ENCODE measurements at regions of chr4 and their contacts with region 1.

Region 1: GRCh38 chr4:113394730-113395530 is 345.5 kb downstream of the ANK2 start:
- DNase-seq: no peak
- ATAC-seq: peak; percentile 93 to 94
- H3K4me3 ChIP-seq: no peak overlapping the region
- H3K27ac ChIP-seq: no peak overlapping the region
- H3K4me1 ChIP-seq: no peaks in the 10 kb centered on the region
- H3K27me3 ChIP-seq: no peaks in the 10 kb centered on the region

Region 2: DNA sequence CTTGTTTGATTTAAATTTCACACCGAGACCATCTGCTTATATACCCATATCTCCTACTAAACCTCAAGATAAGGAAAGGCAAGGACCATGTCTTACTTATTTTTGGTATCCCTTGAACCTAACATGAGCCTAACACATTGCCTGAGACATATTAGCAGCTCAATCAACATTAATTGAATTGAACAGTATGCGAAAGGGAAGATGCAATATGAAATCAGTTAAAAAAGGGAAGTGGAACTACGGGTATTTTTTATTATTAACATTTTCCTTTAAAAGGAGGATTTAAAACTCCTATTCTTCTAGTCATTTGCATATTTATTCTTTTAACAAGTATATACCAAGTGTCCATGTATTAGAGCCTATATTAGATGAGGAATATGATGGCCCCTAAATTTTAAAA is 169.6 kb after region 1 on chr4:
- intact Hi-C with region 1: no loop called
- DNase-seq: no peak
- ATAC-seq: no peak
- H3K4me3 ChIP-seq: no peak overlapping the region
- H3K27ac ChIP-seq: no peak overlapping the region
- H3K4me1 ChIP-seq: no peaks in the 10 kb centered on the region
- H3K27me3 ChIP-seq: no peaks in the 10 kb centered on the region

Region 3: GRCh38 chr4:113574636-113575103 is 179.7 kb after region 1 on chr4:
- intact Hi-C with region 1: no loop called
- DNase-seq: no peak
- ATAC-seq: peak; percentile 50 to 65
- H3K4me3 ChIP-seq: no peak overlapping the region
- H3K27ac ChIP-seq: peak overlapping the region; percentile 37
- H3K4me1 ChIP-seq: peaks cover 4% of the 10 kb centered on the region
- H3K27me3 ChIP-seq: no peaks in the 10 kb centered on the region

Region 4: DNA sequence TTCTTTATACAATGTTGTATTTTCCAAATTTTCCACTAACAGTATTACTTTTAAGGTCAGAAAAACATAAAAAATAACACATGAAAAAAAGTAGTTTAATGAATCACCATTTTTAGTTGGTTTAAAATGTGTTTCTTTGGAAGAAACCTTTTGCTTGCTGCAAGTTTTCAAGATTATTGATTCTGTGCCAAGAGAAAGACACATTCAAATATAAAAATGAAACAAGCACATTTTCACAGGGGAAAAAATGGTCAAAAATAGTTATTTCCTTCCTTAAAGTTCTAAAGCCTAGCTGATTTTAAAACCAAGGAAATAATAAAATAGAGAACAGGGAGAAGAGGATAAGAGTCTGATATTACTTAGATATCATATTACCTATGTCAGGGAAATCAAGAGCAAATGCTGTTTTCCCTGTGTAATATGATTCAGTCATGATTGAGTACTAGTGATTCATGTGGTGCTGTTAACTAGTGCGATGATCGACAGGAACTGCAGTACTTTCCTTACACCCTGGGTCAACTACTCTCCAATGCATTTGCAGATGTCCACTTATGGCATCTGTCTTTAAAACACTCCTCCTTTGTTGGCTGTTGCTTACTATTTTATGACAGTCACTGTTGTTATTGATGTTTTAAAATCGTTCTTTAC is 262.8 kb after region 1 on chr4:
- intact Hi-C with region 1: no loop called
- DNase-seq: no peak
- ATAC-seq: no peak
- H3K4me3 ChIP-seq: no peak overlapping the region
- H3K27ac ChIP-seq: no peak overlapping the region
- H3K4me1 ChIP-seq: no peaks in the 10 kb centered on the region
- H3K27me3 ChIP-seq: no peaks in the 10 kb centered on the region

Region 5: DNA sequence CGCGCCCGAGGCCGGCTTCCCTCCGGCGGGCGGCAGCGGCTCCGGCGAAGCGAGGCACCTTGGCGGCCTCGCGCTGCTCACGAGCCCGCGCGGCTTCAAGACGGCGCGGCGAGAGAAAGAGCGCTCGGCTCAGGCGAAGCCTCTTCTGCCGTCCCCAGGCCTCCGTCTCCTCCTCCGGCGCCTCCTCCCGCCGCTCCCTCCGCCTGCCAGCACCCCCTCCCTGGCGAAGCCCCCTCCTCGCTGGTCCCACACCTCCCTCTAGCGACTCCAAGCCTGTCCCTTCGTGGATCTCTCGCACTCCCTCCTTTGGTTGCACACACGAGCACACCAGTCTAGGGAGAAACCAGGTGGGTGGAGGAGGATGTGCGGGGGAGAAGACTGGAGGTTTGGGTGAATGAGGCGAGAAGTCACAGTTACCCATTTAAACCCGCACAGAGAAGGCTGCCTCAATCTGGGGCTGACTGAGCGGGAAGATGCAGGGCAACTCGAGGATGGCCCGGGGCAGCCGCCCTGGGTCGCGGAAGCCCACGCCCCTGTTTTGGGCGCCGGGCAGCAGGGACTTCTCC is 366.8 kb after region 1 on chr4 and contains the start of gene CAMK2D:
- intact Hi-C with region 1: loop called in 3 of 4 experiments (anchors 5 to 10 kb)
- DNase-seq: peak; percentile 84 to 95 (median 94)
- ATAC-seq: peak; percentile 78 to 88
- H3K4me3 ChIP-seq: peak within 1 kb of the TSS; percentile 71
- H3K27ac ChIP-seq: peak within 1 kb of the TSS; percentile 98
- H3K4me1 ChIP-seq: no peaks in the 10 kb centered on the region
- H3K27me3 ChIP-seq: no peaks in the 10 kb centered on the region
- total RNA-seq, gene CAMK2D: 150 to 177 (median 152) TPM

Region 6: GRCh38 chr4:113901994-113902787 is 507.3 kb after region 1 on chr4:
- intact Hi-C with region 1: loop called in 2 of 4 experiments (anchors 10 kb)
- DNase-seq: peak in 1 of 3 donors; percentile 47
- ATAC-seq: peak in 1 of 2 donors; percentile 60
- H3K4me3 ChIP-seq: no peak overlapping the region
- H3K27ac ChIP-seq: no peak overlapping the region
- H3K4me1 ChIP-seq: no peaks in the 10 kb centered on the region
- H3K27me3 ChIP-seq: no peaks in the 10 kb centered on the region

Region 7: DNA sequence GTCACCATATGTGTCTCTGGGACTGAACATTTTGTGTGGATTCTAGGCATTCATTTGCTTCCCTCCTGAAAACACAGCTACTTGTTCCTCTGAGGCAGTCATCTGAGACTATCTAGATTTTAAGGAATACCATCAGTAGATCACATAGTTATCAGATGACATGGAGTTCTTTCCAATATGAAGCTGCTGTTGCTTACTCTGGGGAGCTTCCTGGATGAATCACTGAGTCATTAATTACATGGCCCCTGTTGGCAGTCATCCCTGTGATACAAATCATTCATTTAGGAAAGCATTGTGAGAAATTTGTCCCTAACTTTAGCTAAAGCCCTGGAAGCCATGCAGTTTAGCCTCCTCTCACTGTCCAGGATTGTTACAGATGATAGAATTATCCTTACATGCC is 682.7 kb after region 1 on chr4:
- intact Hi-C with region 1: loop called in 1 of 4 experiments (anchors 10 kb)
- DNase-seq: no peak
- ATAC-seq: no peak
- H3K4me3 ChIP-seq: no peak overlapping the region
- H3K27ac ChIP-seq: no peak overlapping the region
- H3K4me1 ChIP-seq: no peaks in the 10 kb centered on the region
- H3K27me3 ChIP-seq: no peaks in the 10 kb centered on the region

Measured in right cardiac atrium (tissue), 5 donors.